PC-3 (cell line): ENCODE measurements at regions of chrX and their contacts with region 1.

Region 1: GRCh38 chrX:132463411-132463810 is 25.4 kb downstream of the MBNL3 start:
- DNase-seq: peak; percentile 73
- ATAC-seq: no peak
- H3K4me3 ChIP-seq: no peak overlapping the region
- H3K27ac ChIP-seq: no peak overlapping the region
- H3K4me1 ChIP-seq: peaks cover 19% of the 10 kb centered on the region
- H3K27me3 ChIP-seq: no peaks in the 10 kb centered on the region
- CTCF ChIP-seq: peak; percentile 80

Region 2: GRCh38 chrX:132226169-132226568 is 237.2 kb before region 1 on chrX:
- CTCF ChIA-PET with region 1: no interaction called
- POLR2A ChIA-PET with region 1: no interaction called
- intact Hi-C with region 1: loop called (anchors 10 kb)
- DNase-seq: peak; percentile 34
- ATAC-seq: no peak
- H3K4me3 ChIP-seq: no peak overlapping the region
- H3K27ac ChIP-seq: no peak overlapping the region
- H3K4me1 ChIP-seq: no peaks in the 10 kb centered on the region
- H3K27me3 ChIP-seq: no peaks in the 10 kb centered on the region
- CTCF ChIP-seq: peak; percentile 59

Region 3: DNA sequence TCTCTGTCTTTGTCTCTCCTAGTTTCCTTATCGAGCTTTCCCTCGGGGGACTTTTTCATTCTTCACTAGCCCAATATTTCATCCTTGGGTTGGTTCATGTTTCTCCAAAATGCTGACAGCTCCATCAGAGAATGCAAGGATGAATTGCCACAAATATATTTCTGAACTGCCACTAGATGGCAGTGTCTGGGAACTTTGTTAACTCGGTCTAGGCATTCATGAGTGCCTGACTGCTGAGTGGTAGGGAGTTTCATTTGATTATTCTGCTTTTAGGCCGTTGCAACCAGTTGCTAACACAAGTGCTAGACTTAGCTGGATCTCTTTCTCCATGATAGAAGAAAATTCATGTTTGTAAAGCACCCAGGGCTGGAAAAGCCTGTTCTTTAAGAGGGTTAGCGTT is 170.6 kb before region 1 on chrX:
- CTCF ChIA-PET with region 1: interaction called, 3 read pairs
- POLR2A ChIA-PET with region 1: no interaction called
- intact Hi-C with region 1: loop called (anchors 2 kb)
- DNase-seq: peak; percentile 66
- ATAC-seq: peak; percentile 74
- H3K4me3 ChIP-seq: no peak overlapping the region
- H3K27ac ChIP-seq: no peak overlapping the region
- H3K4me1 ChIP-seq: no peaks in the 10 kb centered on the region
- H3K27me3 ChIP-seq: no peaks in the 10 kb centered on the region
- CTCF ChIP-seq: peak; percentile 75

Region 4: GRCh38 chrX:132389480-132389879 is 73.9 kb before region 1 on chrX:
- CTCF ChIA-PET with region 1: no interaction called
- POLR2A ChIA-PET with region 1: no interaction called
- intact Hi-C with region 1: no loop called
- DNase-seq: no peak
- ATAC-seq: no peak
- H3K4me3 ChIP-seq: no peak overlapping the region
- H3K27ac ChIP-seq: no peak overlapping the region
- H3K4me1 ChIP-seq: no peaks in the 10 kb centered on the region
- H3K27me3 ChIP-seq: no peaks in the 10 kb centered on the region
- CTCF ChIP-seq: no peak

Region 5: DNA sequence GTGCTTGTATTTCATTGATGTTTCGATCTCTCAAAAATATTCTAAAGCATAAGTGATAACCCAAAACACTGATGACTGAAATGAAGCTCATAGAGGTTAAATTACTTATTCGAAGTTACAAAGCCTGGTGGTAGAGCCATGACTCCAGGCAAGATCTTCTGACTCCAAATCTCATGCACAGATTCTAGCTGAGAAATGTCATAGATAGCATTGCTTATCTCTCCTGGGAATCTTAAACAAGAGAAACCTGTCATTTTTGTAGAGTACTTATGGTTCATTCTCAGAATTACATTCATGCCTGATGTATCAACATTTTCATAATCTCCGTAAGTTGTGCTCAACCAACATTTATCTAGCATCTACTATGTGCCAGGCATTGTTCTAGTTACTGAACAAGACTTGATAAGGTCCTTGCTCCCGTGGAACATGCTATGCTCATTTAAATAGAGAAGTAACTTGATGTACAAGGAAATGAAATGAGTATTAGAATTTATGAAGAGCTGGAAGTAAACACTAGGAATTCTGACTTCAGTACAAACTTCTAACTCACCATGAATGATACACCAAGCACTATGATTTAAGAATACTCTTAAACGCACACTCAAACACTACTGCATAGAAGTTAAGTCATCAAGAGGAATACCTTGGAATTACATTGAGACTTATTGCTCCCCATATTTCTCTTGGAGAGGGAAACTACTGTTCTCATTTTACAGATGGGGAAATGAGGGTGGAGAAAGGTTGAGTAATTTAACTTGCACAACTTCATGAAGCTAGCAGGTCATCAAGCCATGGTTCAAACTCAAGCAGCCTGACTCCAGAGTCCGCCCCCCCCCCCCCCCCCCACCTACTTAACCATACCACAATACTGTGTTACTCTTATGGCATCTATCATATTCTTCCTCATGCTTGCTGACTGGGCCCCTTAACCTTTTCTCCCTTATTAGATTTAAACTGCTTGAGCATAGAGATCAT is 20.0 kb before region 1 on chrX:
- CTCF ChIA-PET with region 1: no interaction called
- POLR2A ChIA-PET with region 1: no interaction called
- intact Hi-C with region 1: loop called (anchors 2 kb)
- DNase-seq: no peak
- ATAC-seq: no peak
- H3K4me3 ChIP-seq: no peak overlapping the region
- H3K27ac ChIP-seq: no peak overlapping the region
- H3K4me1 ChIP-seq: peaks cover 13% of the 10 kb centered on the region
- H3K27me3 ChIP-seq: no peaks in the 10 kb centered on the region
- CTCF ChIP-seq: no peak